Gastrocnemius medialis (tissue), 4 donors: ENCODE measurements at regions of chr20 and their contacts with region 1.

Region 1: GRCh38 chr20:45507011-45507820 is 8.2 kb downstream of the SPINT3 start:
- DNase-seq: no peak
- ATAC-seq: no peak
- H3K4me3 ChIP-seq: no peak overlapping the region
- H3K27ac ChIP-seq: no peak overlapping the region
- H3K4me1 ChIP-seq: no peaks in the 10 kb centered on the region
- H3K27me3 ChIP-seq: no peaks in the 10 kb centered on the region
- CTCF ChIP-seq: no peak
- POLR2A ChIP-seq: no peak

Region 2: GRCh38 chr20:45670139-45670538 is 162.9 kb after region 1 on chr20 and contains the start of gene WFDC11:
- in situ Hi-C with region 1: no loop called
- intact Hi-C with region 1: no loop called
- DNase-seq: no peak
- ATAC-seq: no peak
- H3K4me3 ChIP-seq: no peak within 1 kb of the TSS
- H3K27ac ChIP-seq: no peak within 1 kb of the TSS
- H3K4me1 ChIP-seq: no peaks in the 10 kb centered on the region
- H3K27me3 ChIP-seq: no peaks in the 10 kb centered on the region
- CTCF ChIP-seq: no peak
- POLR2A ChIP-seq: no peak
- total RNA-seq, gene WFDC11: not detected

Region 3: GRCh38 chr20:46458866-46459750 is 951.9 kb after region 1 on chr20:
- in situ Hi-C with region 1: loop called in 1 of 4 experiments (anchors 25 kb)
- intact Hi-C with region 1: no loop called
- DNase-seq: no peak
- ATAC-seq: no peak
- H3K4me3 ChIP-seq: no peak overlapping the region
- H3K27ac ChIP-seq: no peak overlapping the region
- H3K4me1 ChIP-seq: no peaks in the 10 kb centered on the region
- H3K27me3 ChIP-seq: peaks cover 0 to 11% (median 8%) of the 10 kb centered on the region in 3 donors
- CTCF ChIP-seq: no peak
- POLR2A ChIP-seq: no peak